ENCODE measurements at regions of chr3 and their contacts with region 1.

Region 1: GRCh38 chr3:120506828-120507774 is 56.3 kb upstream of the FSTL1 start:
- DNase-seq: peak in 1 of 2 donors; percentile 56
- H3K4me3 ChIP-seq: no peak overlapping the region
- H3K27ac ChIP-seq: peak overlapping the region; percentile 24 to 45
- H3K4me1 ChIP-seq: peaks cover 0 to 21% (median 10%) of the 10 kb centered on the region in 4 donors
- H3K27me3 ChIP-seq: no peaks in the 10 kb centered on the region
- CTCF ChIP-seq: peak; percentile 63 to 70

Region 2: DNA sequence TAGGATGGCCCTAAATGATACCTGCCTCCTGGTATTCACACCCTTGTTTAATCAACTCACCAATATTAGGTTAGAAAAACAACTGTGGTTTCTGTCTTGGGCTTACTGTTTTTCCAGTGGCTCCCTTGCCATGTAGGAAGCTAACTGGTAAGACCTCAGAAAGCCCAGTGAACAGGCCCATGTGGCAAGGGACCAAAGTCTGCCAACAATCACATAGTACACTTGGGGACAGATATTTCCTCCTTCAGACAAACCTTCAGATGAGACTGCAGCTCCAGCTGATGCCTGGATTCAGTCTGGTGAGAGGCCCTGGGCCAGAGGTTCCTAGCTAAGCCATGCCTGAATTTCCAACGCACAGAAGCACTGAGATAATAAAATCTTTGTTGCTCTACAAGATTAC is 508.9 kb before region 1 on chr3:
- intact Hi-C with region 1: loop called (anchors 5 kb)
- DNase-seq: no peak
- H3K4me3 ChIP-seq: no peak overlapping the region
- H3K27ac ChIP-seq: no peak overlapping the region
- H3K4me1 ChIP-seq: peaks cover 0 to 6% (median 0%) of the 10 kb centered on the region in 4 donors
- H3K27me3 ChIP-seq: no peaks in the 10 kb centered on the region
- CTCF ChIP-seq: no peak

Region 3: DNA sequence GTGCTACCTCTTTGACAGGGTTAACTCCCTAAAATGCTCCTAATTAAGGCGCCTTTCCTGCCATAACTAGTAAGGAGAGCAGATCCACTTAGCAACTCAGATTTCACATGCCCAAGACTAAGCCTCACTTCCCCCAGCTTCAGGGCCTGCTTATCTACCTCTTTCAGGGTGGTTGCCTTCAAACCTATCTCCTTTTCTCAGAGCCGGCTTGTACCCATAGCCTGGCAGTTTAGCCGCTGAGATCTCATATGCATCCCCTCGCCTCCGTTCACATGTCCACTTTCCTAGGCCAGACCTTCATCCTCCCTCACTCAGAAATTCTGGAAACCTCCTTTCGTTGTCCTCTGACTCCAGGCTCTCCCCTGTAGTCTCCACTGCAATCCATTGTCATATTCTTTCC is 55.3 kb before region 1 on chr3:
- intact Hi-C with region 1: loop called (anchors 2 kb)
- DNase-seq: no peak
- H3K4me3 ChIP-seq: peak overlapping the region; percentile 74 to 89
- H3K27ac ChIP-seq: peak overlapping the region; percentile 93 to 95
- H3K4me1 ChIP-seq: peaks cover 0 to 32% (median 22%) of the 10 kb centered on the region in 4 donors
- H3K27me3 ChIP-seq: no peaks in the 10 kb centered on the region
- CTCF ChIP-seq: no peak

Measured in tibial artery (tissue), 4 donors.